ENCODE measurements at regions of chr9 and their contacts with region 1.

Region 1: GRCh38 chr9:15211160-15211814 is 95.7 kb downstream of the TTC39B start:
- DNase-seq: peak; percentile 55 to 90
- H3K4me3 ChIP-seq: no peak overlapping the region
- H3K27ac ChIP-seq: peak overlapping the region in 2 of 5 donors; percentile 27 to 39
- H3K4me1 ChIP-seq: peaks cover 6 to 21% (median 13%) of the 10 kb centered on the region in 4 donors
- H3K27me3 ChIP-seq: no peaks in the 10 kb centered on the region
- CTCF ChIP-seq: peak in 5 of 7 experiments; percentile 73 to 91 (median 86)
- EP300 ChIP-seq: no peak
- POLR2A ChIP-seq: no peak

Region 2: GRCh38 chr9:15160673-15161072 is 50.6 kb before region 1 on chr9:
- intact Hi-C with region 1: no loop called
- DNase-seq: no peak
- H3K4me3 ChIP-seq: no peak overlapping the region
- H3K27ac ChIP-seq: no peak overlapping the region
- H3K4me1 ChIP-seq: peaks cover 0 to 10% (median 0%) of the 10 kb centered on the region in 4 donors
- H3K27me3 ChIP-seq: no peaks in the 10 kb centered on the region
- CTCF ChIP-seq: no peak
- EP300 ChIP-seq: no peak
- POLR2A ChIP-seq: no peak

Region 3: GRCh38 chr9:15277400-15278090 is 66.3 kb after region 1 on chr9:
- intact Hi-C with region 1: no loop called
- DNase-seq: peak in 1 of 2 donors; percentile 64
- H3K4me3 ChIP-seq: no peak overlapping the region
- H3K27ac ChIP-seq: no peak overlapping the region
- H3K4me1 ChIP-seq: peaks cover 0 to 41% (median 17%) of the 10 kb centered on the region in 4 donors
- H3K27me3 ChIP-seq: no peaks in the 10 kb centered on the region
- CTCF ChIP-seq: peak in 2 of 7 experiments; percentile 27 to 47
- EP300 ChIP-seq: no peak
- POLR2A ChIP-seq: no peak

Region 4: GRCh38 chr9:15416880-15417279 is 205.6 kb after region 1 on chr9:
- intact Hi-C with region 1: loop called (anchors 10 kb)
- DNase-seq: peak; percentile 63 to 82
- H3K4me3 ChIP-seq: no peak overlapping the region
- H3K27ac ChIP-seq: no peak overlapping the region
- H3K4me1 ChIP-seq: peaks cover 0 to 9% (median 2%) of the 10 kb centered on the region in 4 donors
- H3K27me3 ChIP-seq: no peaks in the 10 kb centered on the region
- CTCF ChIP-seq: peak in 4 of 7 experiments; percentile 11 to 63 (median 28)
- EP300 ChIP-seq: no peak
- POLR2A ChIP-seq: no peak

Region 5: DNA sequence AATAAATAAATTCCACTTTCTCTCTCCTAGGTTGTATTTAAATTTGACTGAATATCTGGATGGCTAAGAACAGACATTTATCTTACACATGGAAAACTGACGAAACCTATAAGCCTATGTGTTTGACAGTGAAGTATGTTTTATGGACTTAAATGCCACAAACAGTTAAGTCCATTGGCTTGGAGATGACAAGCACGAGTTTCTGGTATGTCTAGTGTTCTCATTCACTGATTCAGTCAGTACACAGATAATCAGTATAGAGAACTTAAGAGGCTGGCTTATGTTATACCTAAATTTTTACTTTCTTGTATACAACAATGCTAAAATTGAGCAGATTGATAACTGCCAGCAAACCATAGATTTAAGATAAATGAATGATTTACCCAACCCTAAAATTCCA is 250.3 kb after region 1 on chr9:
- intact Hi-C with region 1: no loop called
- DNase-seq: no peak
- H3K4me3 ChIP-seq: no peak overlapping the region
- H3K27ac ChIP-seq: no peak overlapping the region
- H3K4me1 ChIP-seq: peaks cover 0 to 10% (median 3%) of the 10 kb centered on the region in 4 donors
- H3K27me3 ChIP-seq: no peaks in the 10 kb centered on the region
- CTCF ChIP-seq: no peak
- EP300 ChIP-seq: no peak
- POLR2A ChIP-seq: no peak

Region 6: GRCh38 chr9:15606643-15607472 is 395.6 kb after region 1 on chr9:
- intact Hi-C with region 1: loop called (anchors 10 kb)
- DNase-seq: peak in 1 of 2 donors; percentile 66
- H3K4me3 ChIP-seq: no peak overlapping the region
- H3K27ac ChIP-seq: no peak overlapping the region
- H3K4me1 ChIP-seq: no peaks in the 10 kb centered on the region
- H3K27me3 ChIP-seq: no peaks in the 10 kb centered on the region
- CTCF ChIP-seq: peak in 5 of 7 experiments; percentile 32 to 85 (median 66)
- EP300 ChIP-seq: no peak
- POLR2A ChIP-seq: no peak